ENCODE measurements at regions of chr17 and their contacts with region 1.

Region 1: DNA sequence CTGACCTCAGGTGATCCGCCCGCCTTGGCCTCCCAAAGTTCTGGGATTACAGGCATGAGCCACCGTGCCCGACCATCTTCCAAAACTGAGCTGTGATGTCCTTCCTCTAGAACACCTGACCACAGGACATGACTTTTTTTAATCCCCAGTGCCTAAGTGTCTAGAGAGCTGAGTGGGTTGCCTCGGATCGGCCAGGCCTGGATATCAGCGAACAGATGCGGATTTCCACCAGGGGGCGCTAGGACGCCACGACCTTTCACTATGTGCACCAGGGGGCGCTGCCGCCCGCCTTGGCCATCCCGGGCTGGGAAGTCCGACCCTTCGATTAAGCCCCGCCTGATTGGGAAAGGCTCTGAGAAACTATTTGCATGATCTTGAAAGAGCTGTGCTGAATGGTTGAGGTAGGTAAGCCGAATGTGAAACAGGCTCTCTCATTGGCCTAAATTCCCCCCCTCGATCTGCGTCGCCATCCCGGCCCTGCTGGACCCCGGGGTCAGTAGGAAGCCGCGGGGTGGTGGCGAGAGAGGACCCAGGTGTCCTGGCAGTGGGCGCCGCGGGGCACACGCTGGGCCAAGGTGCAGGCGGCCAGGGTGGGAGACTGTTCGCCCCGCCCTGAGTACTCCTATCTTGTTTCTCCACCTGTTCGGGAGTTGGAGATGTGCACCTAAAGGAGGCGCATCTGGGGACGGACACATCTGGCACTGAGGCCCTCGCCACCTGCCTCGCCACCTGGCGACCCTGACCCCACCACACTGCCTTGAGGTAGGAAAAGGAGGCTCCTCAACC is at the start of gene ACBD4:
- DNase-seq: peak; percentile 95 to 99 (median 98)
- ATAC-seq: peak; percentile 86
- H3K4me3 ChIP-seq: peak within 1 kb of the TSS; percentile 92 to 98
- H3K4me3 Mint-ChIP-seq: peak within 1 kb of the TSS; percentile 90
- H3K27ac ChIP-seq: peak within 1 kb of the TSS; percentile 62 to 78
- H3K27ac Mint-ChIP-seq: peak within 1 kb of the TSS; percentile 84
- H3K4me1 ChIP-seq: peaks cover 12% of the 10 kb centered on the region
- H3K4me1 Mint-ChIP-seq: peaks cover 28% of the 10 kb centered on the region
- H3K27me3 ChIP-seq: no peaks in the 10 kb centered on the region
- H3K27me3 Mint-ChIP-seq: peaks cover 2% of the 10 kb centered on the region
- CTCF ChIP-seq: peak; percentile 100
- total RNA-seq, gene ACBD4: 15.5 to 19.3 TPM

Region 2: GRCh38 chr17:44738214-44738906 is 397.0 kb before region 1 on chr17:
- CTCF ChIA-PET with region 1: no interaction called
- POLR2A ChIA-PET with region 1: no interaction called
- intact Hi-C with region 1: no loop called
- DNase-seq: no peak
- ATAC-seq: no peak
- H3K4me3 ChIP-seq: no peak overlapping the region
- H3K4me3 Mint-ChIP-seq: no peak overlapping the region
- H3K27ac ChIP-seq: no peak overlapping the region
- H3K27ac Mint-ChIP-seq: no peak overlapping the region
- H3K4me1 ChIP-seq: no peaks in the 10 kb centered on the region
- H3K4me1 Mint-ChIP-seq: no peaks in the 10 kb centered on the region
- H3K27me3 ChIP-seq: no peaks in the 10 kb centered on the region
- H3K27me3 Mint-ChIP-seq: no peaks in the 10 kb centered on the region
- CTCF ChIP-seq: no peak

Region 3: DNA sequence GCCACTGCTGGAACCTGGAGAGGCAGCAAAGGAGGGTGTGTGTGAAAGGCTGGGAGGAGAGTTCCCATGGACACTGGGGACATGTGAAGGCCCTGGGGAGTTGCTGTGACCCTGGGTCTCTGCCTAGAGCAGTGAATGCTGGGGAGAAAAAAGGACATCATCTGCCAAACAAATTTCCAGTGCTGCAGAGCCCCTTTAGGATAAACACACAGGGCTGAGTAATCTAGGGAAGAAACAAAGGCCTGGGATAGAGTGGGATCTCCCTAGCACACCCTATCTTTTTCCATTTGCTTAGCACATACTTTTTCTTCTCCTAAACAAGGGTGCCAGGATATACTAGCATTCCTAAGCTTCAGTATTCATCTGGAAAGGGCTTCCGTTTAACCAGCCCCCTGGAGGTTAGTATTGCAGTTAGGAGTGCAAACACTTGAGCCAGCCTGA is 291.0 kb before region 1 on chr17:
- CTCF ChIA-PET with region 1: no interaction called
- POLR2A ChIA-PET with region 1: no interaction called
- intact Hi-C with region 1: no loop called
- DNase-seq: no peak
- ATAC-seq: no peak
- H3K4me3 ChIP-seq: no peak overlapping the region
- H3K4me3 Mint-ChIP-seq: no peak overlapping the region
- H3K27ac ChIP-seq: no peak overlapping the region
- H3K27ac Mint-ChIP-seq: no peak overlapping the region
- H3K4me1 ChIP-seq: no peaks in the 10 kb centered on the region
- H3K4me1 Mint-ChIP-seq: no peaks in the 10 kb centered on the region
- H3K27me3 ChIP-seq: no peaks in the 10 kb centered on the region
- H3K27me3 Mint-ChIP-seq: no peaks in the 10 kb centered on the region
- CTCF ChIP-seq: no peak

Region 4: DNA sequence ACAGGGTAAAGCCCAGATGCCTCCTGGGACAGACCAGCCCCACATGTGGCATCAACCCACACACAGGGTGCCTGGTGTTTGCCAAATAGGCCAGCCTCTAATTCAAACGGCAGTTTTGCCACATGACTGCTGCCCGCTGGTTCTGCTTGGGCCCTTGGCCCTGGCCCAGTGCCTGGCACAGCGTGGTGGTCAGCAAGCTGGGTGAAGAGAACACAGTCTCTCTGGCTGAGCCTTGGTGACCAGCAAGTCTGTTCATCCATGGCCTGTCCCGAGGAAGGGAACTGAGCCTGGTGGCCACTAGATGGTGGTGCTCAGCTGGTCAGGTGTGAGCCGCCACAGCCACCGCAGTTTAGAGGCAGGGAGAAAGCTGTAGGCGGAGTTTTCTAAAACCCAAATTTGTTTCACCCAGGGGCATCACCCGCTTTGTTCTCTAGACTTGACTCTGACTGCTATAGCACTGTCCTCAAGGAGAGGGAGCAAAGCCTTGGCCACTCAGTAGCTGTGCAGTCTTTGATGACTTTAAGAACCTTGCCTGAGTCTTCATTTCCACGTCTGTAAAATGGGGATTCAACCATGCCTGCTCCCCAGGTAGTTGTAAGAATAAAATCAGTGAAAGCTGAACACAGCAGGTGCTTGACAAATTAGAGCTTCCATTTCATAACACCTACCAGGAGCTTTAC is 215.4 kb before region 1 on chr17:
- CTCF ChIA-PET with region 1: interaction called, 15 read pairs
- POLR2A ChIA-PET with region 1: no interaction called
- intact Hi-C with region 1: no loop called
- DNase-seq: peak; percentile 19 to 70 (median 52)
- ATAC-seq: peak; percentile 91
- H3K4me3 ChIP-seq: no peak overlapping the region
- H3K4me3 Mint-ChIP-seq: no peak overlapping the region
- H3K27ac ChIP-seq: no peak overlapping the region
- H3K27ac Mint-ChIP-seq: no peak overlapping the region
- H3K4me1 ChIP-seq: no peaks in the 10 kb centered on the region
- H3K4me1 Mint-ChIP-seq: no peaks in the 10 kb centered on the region
- H3K27me3 ChIP-seq: peaks cover 4% of the 10 kb centered on the region in 2 experiments
- H3K27me3 Mint-ChIP-seq: peaks cover 11% of the 10 kb centered on the region
- CTCF ChIP-seq: peak; percentile 32

Region 5: GRCh38 chr17:45021607-45022287 is 113.6 kb before region 1 on chr17:
- CTCF ChIA-PET with region 1: no interaction called
- POLR2A ChIA-PET with region 1: no interaction called
- intact Hi-C with region 1: no loop called
- DNase-seq: peak; percentile 35 to 82 (median 61)
- ATAC-seq: peak; percentile 87
- H3K4me3 ChIP-seq: peak overlapping the region; percentile 40 to 42
- H3K4me3 Mint-ChIP-seq: peak overlapping the region; percentile 59
- H3K27ac ChIP-seq: no peak overlapping the region
- H3K27ac Mint-ChIP-seq: no peak overlapping the region
- H3K4me1 ChIP-seq: peaks cover 20% of the 10 kb centered on the region
- H3K4me1 Mint-ChIP-seq: peaks cover 21% of the 10 kb centered on the region
- H3K27me3 ChIP-seq: peaks cover 20 to 21% of the 10 kb centered on the region in 2 experiments
- H3K27me3 Mint-ChIP-seq: peaks cover 37% of the 10 kb centered on the region
- CTCF ChIP-seq: peak; percentile 90

Region 6: GRCh38 chr17:45098869-45099616 is 36.3 kb before region 1 on chr17:
- CTCF ChIA-PET with region 1: interaction called, 14 read pairs
- POLR2A ChIA-PET with region 1: no interaction called
- intact Hi-C with region 1: loop called in 1 of 2 experiments (anchors 1 kb)
- DNase-seq: peak; percentile 48 to 85 (median 74)
- ATAC-seq: peak; percentile 86
- H3K4me3 ChIP-seq: no peak overlapping the region
- H3K4me3 Mint-ChIP-seq: no peak overlapping the region
- H3K27ac ChIP-seq: no peak overlapping the region
- H3K27ac Mint-ChIP-seq: no peak overlapping the region
- H3K4me1 ChIP-seq: no peaks in the 10 kb centered on the region
- H3K4me1 Mint-ChIP-seq: no peaks in the 10 kb centered on the region
- H3K27me3 ChIP-seq: no peaks in the 10 kb centered on the region
- H3K27me3 Mint-ChIP-seq: no peaks in the 10 kb centered on the region
- CTCF ChIP-seq: peak; percentile 83

Region 7: GRCh38 chr17:45161019-45161825 is 25.8 kb after region 1 on chr17:
- CTCF ChIA-PET with region 1: interaction called, 239 read pairs
- POLR2A ChIA-PET with region 1: interaction called, 26 read pairs
- intact Hi-C with region 1: loop called (anchors 1 kb)
- DNase-seq: peak; percentile 96 to 100 (median 98)
- ATAC-seq: peak; percentile 93
- H3K4me3 ChIP-seq: peak overlapping the region; percentile 82 to 84
- H3K4me3 Mint-ChIP-seq: peak overlapping the region; percentile 93
- H3K27ac ChIP-seq: peak overlapping the region; percentile 90 to 97
- H3K27ac Mint-ChIP-seq: peak overlapping the region; percentile 99
- H3K4me1 ChIP-seq: peaks cover 34% of the 10 kb centered on the region
- H3K4me1 Mint-ChIP-seq: peaks cover 40% of the 10 kb centered on the region
- H3K27me3 ChIP-seq: no peaks in the 10 kb centered on the region
- H3K27me3 Mint-ChIP-seq: no peaks in the 10 kb centered on the region
- CTCF ChIP-seq: no peak

Region 8: DNA sequence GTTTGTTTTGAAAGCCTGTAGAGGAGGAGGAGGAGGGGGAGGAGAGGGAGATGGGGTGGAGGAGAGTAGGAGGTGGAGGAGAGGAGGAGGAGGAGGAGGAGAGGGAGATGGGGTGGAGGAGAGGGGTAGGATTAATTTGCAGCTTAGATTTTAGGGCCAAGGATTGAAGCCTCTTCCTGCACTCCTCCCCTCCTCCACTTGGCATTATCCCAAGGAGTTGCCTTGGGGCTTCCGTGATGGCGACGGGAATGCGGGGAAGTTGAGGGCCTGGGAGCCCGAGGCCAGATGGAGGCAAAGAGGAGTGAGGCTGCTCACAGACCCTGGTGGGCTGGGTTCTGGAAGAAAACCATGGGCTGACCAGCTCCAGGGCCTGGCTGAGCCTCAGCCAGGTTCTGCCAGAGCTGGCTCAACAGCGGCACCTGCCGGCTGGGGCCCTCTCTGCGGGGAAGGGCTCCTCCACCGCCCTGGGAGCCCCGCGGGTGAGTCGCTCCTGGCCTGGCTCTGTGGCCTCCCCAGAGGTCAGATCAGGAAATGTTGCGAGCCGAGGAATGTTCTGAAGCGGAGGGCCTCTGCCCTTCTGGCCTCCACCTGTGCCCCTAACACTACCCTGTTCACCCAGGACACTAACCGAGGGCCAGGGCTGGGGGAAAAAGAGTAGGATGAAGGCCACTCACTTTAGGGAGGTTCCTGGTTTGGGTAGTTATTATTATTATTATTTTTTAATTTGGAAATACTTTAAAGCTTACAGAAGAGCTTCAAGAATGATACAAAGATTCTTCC is 62.4 kb after region 1 on chr17:
- CTCF ChIA-PET with region 1: interaction called, 277 read pairs
- POLR2A ChIA-PET with region 1: interaction called, 22 read pairs
- intact Hi-C with region 1: loop called (anchors 1 kb)
- DNase-seq: peak; percentile 75 to 93 (median 86)
- ATAC-seq: peak; percentile 100
- H3K4me3 ChIP-seq: no peak overlapping the region
- H3K4me3 Mint-ChIP-seq: no peak overlapping the region
- H3K27ac ChIP-seq: no peak overlapping the region
- H3K27ac Mint-ChIP-seq: no peak overlapping the region
- H3K4me1 ChIP-seq: peaks cover 7% of the 10 kb centered on the region
- H3K4me1 Mint-ChIP-seq: peaks cover 4% of the 10 kb centered on the region
- H3K27me3 ChIP-seq: no peaks in the 10 kb centered on the region
- H3K27me3 Mint-ChIP-seq: no peaks in the 10 kb centered on the region
- CTCF ChIP-seq: peak; percentile 85

Region 9: GRCh38 chr17:45317112-45317928 is 181.9 kb after region 1 on chr17:
- CTCF ChIA-PET with region 1: interaction called, 8 read pairs
- POLR2A ChIA-PET with region 1: interaction called, 3 read pairs
- intact Hi-C with region 1: loop called in 1 of 2 experiments (anchors 1 kb)
- DNase-seq: peak; percentile 99 to 100 (median 100)
- ATAC-seq: peak; percentile 81
- H3K4me3 ChIP-seq: peak overlapping the region; percentile 55 to 81
- H3K4me3 Mint-ChIP-seq: peak overlapping the region; percentile 95
- H3K27ac ChIP-seq: peak overlapping the region; percentile 75 to 81
- H3K27ac Mint-ChIP-seq: peak overlapping the region; percentile 94
- H3K4me1 ChIP-seq: peaks cover 78% of the 10 kb centered on the region
- H3K4me1 Mint-ChIP-seq: peaks cover 80% of the 10 kb centered on the region
- H3K27me3 ChIP-seq: no peaks in the 10 kb centered on the region
- H3K27me3 Mint-ChIP-seq: no peaks in the 10 kb centered on the region
- CTCF ChIP-seq: no peak

Region 10: GRCh38 chr17:46106966-46107644 is 971.7 kb after region 1 on chr17:
- CTCF ChIA-PET with region 1: no interaction called
- POLR2A ChIA-PET with region 1: no interaction called
- intact Hi-C with region 1: no loop called
- DNase-seq: no peak
- ATAC-seq: no peak
- H3K4me3 ChIP-seq: no peak overlapping the region
- H3K4me3 Mint-ChIP-seq: no peak overlapping the region
- H3K27ac ChIP-seq: no peak overlapping the region
- H3K27ac Mint-ChIP-seq: peak overlapping the region; percentile 66
- H3K4me1 ChIP-seq: peaks cover 58% of the 10 kb centered on the region
- H3K4me1 Mint-ChIP-seq: peaks cover 93% of the 10 kb centered on the region
- H3K27me3 ChIP-seq: no peaks in the 10 kb centered on the region
- H3K27me3 Mint-ChIP-seq: no peaks in the 10 kb centered on the region
- CTCF ChIP-seq: no peak